Naive thymus-derived CD4-positive, alpha-beta T cell (primary cell): ENCODE measurements at regions of chr1 and their contacts with region 1.

Region 1: GRCh38 chr1:201890806-201891450 is 2.2 kb downstream of the SHISA4 start:
- DNase-seq: no peak
- ATAC-seq: no peak
- H3K4me3 ChIP-seq: no peak overlapping the region
- H3K4me3 Mint-ChIP-seq: no peak overlapping the region
- H3K27ac ChIP-seq: no peak overlapping the region
- H3K27ac Mint-ChIP-seq: no peak overlapping the region
- H3K4me1 ChIP-seq: peaks cover 0 to 9% of the 10 kb centered on the region in 2 donors
- H3K4me1 Mint-ChIP-seq: peaks cover 5 to 18% (median 11%) of the 10 kb centered on the region in 7 donors
- H3K27me3 ChIP-seq: peaks cover 0 to 6% of the 10 kb centered on the region in 2 donors
- H3K27me3 Mint-ChIP-seq: peaks cover 30 to 54% (median 43%) of the 10 kb centered on the region in 5 donors

Region 2: DNA sequence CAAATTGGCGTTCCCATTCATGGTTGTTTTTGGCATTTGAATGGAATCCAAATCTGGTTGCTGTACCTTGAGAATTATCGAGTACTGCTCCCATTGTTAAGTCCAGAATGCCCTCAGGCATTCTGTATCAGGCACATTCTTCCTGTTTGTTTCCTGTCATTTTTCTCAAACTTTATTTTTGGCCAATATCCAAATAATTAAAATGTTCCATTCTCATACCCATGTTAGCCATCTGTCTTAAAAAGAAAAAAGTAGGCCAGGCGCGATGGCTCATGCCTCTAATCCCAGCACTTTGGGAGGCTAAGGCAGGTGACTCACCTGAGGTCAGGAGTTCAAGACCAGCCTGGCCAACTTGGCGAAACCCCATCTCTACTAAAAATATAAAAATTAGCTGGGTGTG is 31.5 kb before region 1 on chr1:
- CTCF ChIA-PET with region 1: no interaction called
- POLR2A ChIA-PET with region 1: no interaction called
- intact Hi-C with region 1: no loop called
- DNase-seq: no peak
- ATAC-seq: no peak
- H3K4me3 ChIP-seq: no peak overlapping the region
- H3K4me3 Mint-ChIP-seq: no peak overlapping the region
- H3K27ac ChIP-seq: no peak overlapping the region
- H3K27ac Mint-ChIP-seq: peak overlapping the region in 2 of 9 donors; percentile 39 to 44
- H3K4me1 ChIP-seq: no peaks in the 10 kb centered on the region
- H3K4me1 Mint-ChIP-seq: peaks cover 0 to 6% (median 0%) of the 10 kb centered on the region in 7 donors
- H3K27me3 ChIP-seq: no peaks in the 10 kb centered on the region
- H3K27me3 Mint-ChIP-seq: no peaks in the 10 kb centered on the region

Region 3: GRCh38 chr1:201970334-201971159 is 79.6 kb after region 1 on chr1:
- CTCF ChIA-PET with region 1: interaction called, 21 read pairs
- POLR2A ChIA-PET with region 1: no interaction called
- intact Hi-C with region 1: loop called in 1 of 2 experiments (anchors 1 kb)
- DNase-seq: no peak
- ATAC-seq: no peak
- H3K4me3 ChIP-seq: no peak overlapping the region
- H3K4me3 Mint-ChIP-seq: no peak overlapping the region
- H3K27ac ChIP-seq: no peak overlapping the region
- H3K27ac Mint-ChIP-seq: no peak overlapping the region
- H3K4me1 ChIP-seq: no peaks in the 10 kb centered on the region
- H3K4me1 Mint-ChIP-seq: peaks cover 0 to 2% (median 0%) of the 10 kb centered on the region in 7 donors
- H3K27me3 ChIP-seq: no peaks in the 10 kb centered on the region
- H3K27me3 Mint-ChIP-seq: peaks cover 0 to 15% (median 0%) of the 10 kb centered on the region in 5 donors

Region 4: DNA sequence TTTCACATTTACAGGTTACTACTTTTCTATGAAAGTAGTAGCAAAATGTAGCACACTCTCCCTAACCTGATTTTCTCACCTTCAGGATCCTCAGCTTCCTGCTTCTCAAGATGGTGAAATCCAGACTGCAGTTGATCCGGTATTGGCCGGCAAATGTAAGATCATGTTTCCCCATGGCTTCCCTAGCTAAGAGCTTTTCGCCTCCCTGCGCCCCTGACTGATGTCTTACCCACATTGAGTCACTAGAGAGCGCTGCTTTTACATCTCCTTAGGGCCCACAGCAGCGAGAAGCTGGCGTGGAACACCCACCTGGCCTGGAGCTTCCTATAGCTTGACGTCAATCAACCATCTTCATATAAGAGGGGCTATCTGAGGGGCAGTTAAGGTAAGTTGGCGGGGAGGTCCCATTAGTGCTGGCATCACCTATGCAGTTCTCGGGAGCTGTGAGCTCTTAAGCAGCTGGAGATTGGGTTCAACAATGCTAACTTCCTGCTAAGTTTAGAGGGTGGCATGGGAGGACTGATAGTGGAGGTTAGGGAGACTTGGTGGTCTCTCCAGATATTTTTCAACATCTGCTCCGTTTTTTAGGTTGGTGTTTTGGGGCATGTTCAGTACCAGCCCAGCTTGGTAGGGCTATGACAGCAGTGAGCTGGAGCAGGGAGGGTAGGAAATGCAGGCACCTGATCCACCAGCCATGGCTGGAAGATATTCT is 264.0 kb after region 1 on chr1:
- CTCF ChIA-PET with region 1: no interaction called
- POLR2A ChIA-PET with region 1: no interaction called
- intact Hi-C with region 1: no loop called
- DNase-seq: peak in 5 of 9 donors; percentile 45 to 52 (median 48)
- ATAC-seq: peak; percentile 85
- H3K4me3 ChIP-seq: no peak overlapping the region
- H3K4me3 Mint-ChIP-seq: peak overlapping the region in 2 of 10 donors; percentile 1 to 46
- H3K27ac ChIP-seq: peak overlapping the region; percentile 47
- H3K27ac Mint-ChIP-seq: peak overlapping the region; percentile 17 to 87 (median 67)
- H3K4me1 ChIP-seq: peaks cover 29 to 35% of the 10 kb centered on the region in 2 donors
- H3K4me1 Mint-ChIP-seq: peaks cover 28 to 58% (median 51%) of the 10 kb centered on the region in 7 donors
- H3K27me3 ChIP-seq: no peaks in the 10 kb centered on the region
- H3K27me3 Mint-ChIP-seq: no peaks in the 10 kb centered on the region